OCI-LY7 (cell line): ENCODE measurements at regions of chr14 and their contacts with region 1.

Region 1: GRCh38 chr14:104094709-104095438 is 9.4 kb downstream of the ASPG start:
- DNase-seq: peak; percentile 52
- H3K4me3 ChIP-seq: no peak overlapping the region
- H3K27ac ChIP-seq: no peak overlapping the region
- H3K4me1 ChIP-seq: peaks cover 3% of the 10 kb centered on the region
- CTCF ChIP-seq: peak; percentile 85

Region 2: GRCh38 chr14:103213331-103213730 is 881.5 kb before region 1 on chr14:
- CTCF ChIA-PET with region 1: no interaction called
- POLR2A ChIA-PET with region 1: no interaction called
- intact Hi-C with region 1: no loop called
- DNase-seq: no peak
- H3K4me3 ChIP-seq: no peak overlapping the region
- H3K27ac ChIP-seq: no peak overlapping the region
- H3K4me1 ChIP-seq: no peaks in the 10 kb centered on the region
- CTCF ChIP-seq: no peak

Region 3: DNA sequence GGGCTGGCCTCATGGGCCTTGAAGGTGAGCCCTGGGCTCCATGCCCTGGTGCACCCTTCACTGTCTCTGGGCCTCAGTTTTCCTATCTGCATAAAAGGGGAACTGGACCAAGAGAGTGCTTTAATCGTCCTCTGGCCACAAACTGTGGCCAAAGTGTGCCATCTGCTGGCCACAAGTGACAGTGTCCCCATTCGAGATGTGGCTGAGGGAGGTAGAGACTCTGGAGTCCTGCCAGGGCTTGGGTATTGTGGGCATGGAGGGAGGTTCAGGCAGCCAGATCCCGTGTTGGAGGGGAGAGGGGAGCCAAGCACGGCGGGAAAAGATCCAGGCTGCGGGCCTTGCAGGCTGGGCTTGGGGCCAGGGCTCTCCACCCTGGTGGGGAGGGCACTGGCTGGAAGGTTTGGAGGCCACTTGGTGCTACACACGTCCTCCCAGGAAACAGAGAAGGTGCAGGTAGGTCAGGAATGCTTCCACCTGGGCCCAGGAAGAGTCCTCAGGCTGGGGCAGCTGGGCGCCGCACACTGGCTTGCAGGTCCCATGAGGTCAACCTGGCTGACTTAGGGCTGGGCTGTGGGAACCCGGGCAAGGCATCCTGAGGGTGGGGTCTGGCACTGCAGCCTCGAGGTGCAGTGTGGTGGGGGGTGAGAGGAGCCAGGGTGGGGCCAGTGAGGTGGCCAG is 36.2 kb after region 1 on chr14:
- CTCF ChIA-PET with region 1: no interaction called
- POLR2A ChIA-PET with region 1: no interaction called
- intact Hi-C with region 1: loop called (anchors 1 kb)
- DNase-seq: peak; percentile 54
- H3K4me3 ChIP-seq: no peak overlapping the region
- H3K27ac ChIP-seq: no peak overlapping the region
- H3K4me1 ChIP-seq: no peaks in the 10 kb centered on the region
- CTCF ChIP-seq: peak; percentile 79